ENCODE measurements at regions of chr2 and their contacts with region 1.

Region 1: GRCh38 chr2:70002241-70002899 is 40.9 kb upstream of the ASPRV1 start:
- DNase-seq: peak; percentile 31
- H3K4me3 ChIP-seq: no peak overlapping the region
- H3K27ac ChIP-seq: no peak overlapping the region
- H3K4me1 ChIP-seq: no peaks in the 10 kb centered on the region
- H3K27me3 ChIP-seq: no peaks in the 10 kb centered on the region
- CTCF ChIP-seq: no peak
- POLR2A ChIP-seq: no peak

Region 2: GRCh38 chr2:69477627-69478026 is 524.7 kb before region 1 on chr2:
- CTCF ChIA-PET with region 1: no interaction called
- POLR2A ChIA-PET with region 1: no interaction called
- dilution Hi-C with region 1: no loop called
- intact Hi-C with region 1: no loop called
- DNase-seq: no peak
- H3K4me3 ChIP-seq: no peak overlapping the region
- H3K27ac ChIP-seq: no peak overlapping the region
- H3K4me1 ChIP-seq: no peaks in the 10 kb centered on the region
- H3K27me3 ChIP-seq: no peaks in the 10 kb centered on the region
- CTCF ChIP-seq: no peak
- POLR2A ChIP-seq: no peak

Region 3: DNA sequence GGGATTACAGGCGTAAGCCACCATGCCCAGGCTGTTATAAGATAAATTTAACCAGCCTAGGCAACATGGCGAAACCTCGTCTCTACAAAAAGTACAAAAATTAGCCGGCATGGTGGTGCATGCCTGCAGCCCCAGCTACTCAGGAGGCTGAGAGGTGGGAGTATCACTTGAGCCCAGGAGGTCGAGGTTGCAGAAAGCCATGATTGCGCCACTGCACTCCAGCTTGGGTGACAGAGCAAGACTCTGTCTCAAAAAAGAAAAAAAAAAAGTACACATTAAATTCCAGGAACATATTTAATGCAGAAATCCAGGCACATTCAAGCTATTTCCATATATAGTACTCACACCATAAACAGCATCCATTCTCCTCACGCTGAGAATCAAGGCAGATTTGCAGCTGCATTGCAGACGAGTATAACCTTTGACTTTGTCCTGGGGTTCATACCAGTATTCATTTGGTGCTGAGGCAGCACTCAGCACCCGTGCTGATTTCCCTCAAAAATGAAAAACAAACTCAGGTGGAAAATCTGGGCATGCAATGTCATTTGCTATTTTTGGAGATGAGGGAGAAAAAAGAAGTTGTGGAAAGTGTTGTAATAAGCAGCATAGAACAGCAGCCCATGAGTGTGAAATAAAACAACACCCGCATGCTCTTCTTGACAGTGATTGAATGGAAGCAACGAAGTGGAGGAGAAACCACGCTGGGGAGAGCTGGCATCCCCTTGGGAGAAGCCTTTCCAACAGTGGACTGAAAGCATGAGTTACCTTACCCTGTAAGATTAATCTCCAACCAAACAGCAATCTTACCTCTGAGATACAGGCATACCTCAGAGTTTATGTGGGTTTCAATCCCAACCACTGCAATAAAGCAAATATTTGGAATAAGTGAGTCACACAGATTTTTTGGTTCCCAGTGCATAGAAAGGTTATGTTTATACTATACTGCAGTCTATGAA is 307.2 kb before region 1 on chr2:
- CTCF ChIA-PET with region 1: no interaction called
- POLR2A ChIA-PET with region 1: no interaction called
- dilution Hi-C with region 1: no loop called
- intact Hi-C with region 1: no loop called
- DNase-seq: no peak
- H3K4me3 ChIP-seq: no peak overlapping the region
- H3K27ac ChIP-seq: no peak overlapping the region
- H3K4me1 ChIP-seq: no peaks in the 10 kb centered on the region
- H3K27me3 ChIP-seq: no peaks in the 10 kb centered on the region
- CTCF ChIP-seq: no peak
- POLR2A ChIP-seq: no peak

Region 4: GRCh38 chr2:69863298-69863697 is 139.1 kb before region 1 on chr2:
- CTCF ChIA-PET with region 1: no interaction called
- POLR2A ChIA-PET with region 1: no interaction called
- dilution Hi-C with region 1: no loop called
- intact Hi-C with region 1: no loop called
- DNase-seq: no peak
- H3K4me3 ChIP-seq: no peak overlapping the region
- H3K27ac ChIP-seq: no peak overlapping the region
- H3K4me1 ChIP-seq: no peaks in the 10 kb centered on the region
- H3K27me3 ChIP-seq: no peaks in the 10 kb centered on the region
- CTCF ChIP-seq: no peak
- POLR2A ChIP-seq: no peak

Region 5: GRCh38 chr2:69946351-69947077 is 55.9 kb before region 1 on chr2:
- CTCF ChIA-PET with region 1: interaction called, 4 read pairs
- POLR2A ChIA-PET with region 1: no interaction called
- dilution Hi-C with region 1: no loop called
- intact Hi-C with region 1: loop called (anchors 5 kb)
- DNase-seq: peak; percentile 41
- H3K4me3 ChIP-seq: no peak overlapping the region
- H3K27ac ChIP-seq: peak overlapping the region; percentile 54
- H3K4me1 ChIP-seq: peaks cover 25% of the 10 kb centered on the region
- H3K27me3 ChIP-seq: no peaks in the 10 kb centered on the region
- CTCF ChIP-seq: no peak
- POLR2A ChIP-seq: no peak

Region 6: GRCh38 chr2:70041663-70042062 is 39.3 kb after region 1 on chr2:
- CTCF ChIA-PET with region 1: interaction called, 11 read pairs
- POLR2A ChIA-PET with region 1: no interaction called
- dilution Hi-C with region 1: no loop called
- intact Hi-C with region 1: no loop called
- DNase-seq: no peak
- H3K4me3 ChIP-seq: no peak overlapping the region
- H3K27ac ChIP-seq: no peak overlapping the region
- H3K4me1 ChIP-seq: peaks cover 4% of the 10 kb centered on the region
- H3K27me3 ChIP-seq: no peaks in the 10 kb centered on the region
- CTCF ChIP-seq: no peak
- POLR2A ChIP-seq: no peak

Region 7: GRCh38 chr2:71130113-71130904 is 1127.9 kb after region 1 on chr2 and contains the starts of genes MCEE and MPHOSPH10:
- CTCF ChIA-PET with region 1: no interaction called
- POLR2A ChIA-PET with region 1: no interaction called
- dilution Hi-C with region 1: no loop called
- intact Hi-C with region 1: no loop called
- DNase-seq: peak; percentile 89
- H3K4me3 ChIP-seq: peak within 1 kb of the TSS; percentile 53 to 92 (median 90)
- H3K27ac ChIP-seq: peak within 1 kb of the TSS; percentile 72
- H3K4me1 ChIP-seq: peaks cover 16% of the 10 kb centered on the region
- H3K27me3 ChIP-seq: no peaks in the 10 kb centered on the region
- CTCF ChIP-seq: no peak
- POLR2A ChIP-seq: peak; percentile 90
- total RNA-seq, gene MCEE: 6.8 and 9.9 TPM in 2 replicates
- total RNA-seq, gene MPHOSPH10: 31.4 and 38.8 TPM in 2 replicates